ENCODE measurements at regions of chr11 and their contacts with region 1.

Region 1: GRCh38 chr11:44775366-44775984 is 48.7 kb downstream of the TSPAN18 start:
- DNase-seq: peak; percentile 57 to 65 (median 58)
- H3K4me3 ChIP-seq: no peak overlapping the region
- H3K4me3 Mint-ChIP-seq: peak overlapping the region in 1 of 8 donors; percentile 29
- H3K27ac ChIP-seq: no peak overlapping the region
- H3K27ac Mint-ChIP-seq: peak overlapping the region in 2 of 7 donors; percentile 74 to 86
- H3K4me1 ChIP-seq: no peaks in the 10 kb centered on the region
- H3K4me1 Mint-ChIP-seq: peaks cover 22 to 63% (median 32%) of the 10 kb centered on the region in 4 donors
- H3K27me3 ChIP-seq: no peaks in the 10 kb centered on the region
- H3K27me3 Mint-ChIP-seq: no peaks in the 10 kb centered on the region

Region 2: GRCh38 chr11:44556735-44557409 is 218.6 kb before region 1 on chr11:
- CTCF ChIA-PET with region 1: interaction called, 35 read pairs
- POLR2A ChIA-PET with region 1: no interaction called
- intact Hi-C with region 1: loop called (anchors 1 kb)
- DNase-seq: peak; percentile 60 to 69 (median 61)
- H3K4me3 ChIP-seq: no peak overlapping the region
- H3K4me3 Mint-ChIP-seq: no peak overlapping the region
- H3K27ac ChIP-seq: no peak overlapping the region
- H3K27ac Mint-ChIP-seq: peak overlapping the region; percentile 54 to 86 (median 70)
- H3K4me1 ChIP-seq: peaks cover 21% of the 10 kb centered on the region
- H3K4me1 Mint-ChIP-seq: peaks cover 16 to 34% (median 27%) of the 10 kb centered on the region in 4 donors
- H3K27me3 ChIP-seq: no peaks in the 10 kb centered on the region
- H3K27me3 Mint-ChIP-seq: no peaks in the 10 kb centered on the region

Region 3: DNA sequence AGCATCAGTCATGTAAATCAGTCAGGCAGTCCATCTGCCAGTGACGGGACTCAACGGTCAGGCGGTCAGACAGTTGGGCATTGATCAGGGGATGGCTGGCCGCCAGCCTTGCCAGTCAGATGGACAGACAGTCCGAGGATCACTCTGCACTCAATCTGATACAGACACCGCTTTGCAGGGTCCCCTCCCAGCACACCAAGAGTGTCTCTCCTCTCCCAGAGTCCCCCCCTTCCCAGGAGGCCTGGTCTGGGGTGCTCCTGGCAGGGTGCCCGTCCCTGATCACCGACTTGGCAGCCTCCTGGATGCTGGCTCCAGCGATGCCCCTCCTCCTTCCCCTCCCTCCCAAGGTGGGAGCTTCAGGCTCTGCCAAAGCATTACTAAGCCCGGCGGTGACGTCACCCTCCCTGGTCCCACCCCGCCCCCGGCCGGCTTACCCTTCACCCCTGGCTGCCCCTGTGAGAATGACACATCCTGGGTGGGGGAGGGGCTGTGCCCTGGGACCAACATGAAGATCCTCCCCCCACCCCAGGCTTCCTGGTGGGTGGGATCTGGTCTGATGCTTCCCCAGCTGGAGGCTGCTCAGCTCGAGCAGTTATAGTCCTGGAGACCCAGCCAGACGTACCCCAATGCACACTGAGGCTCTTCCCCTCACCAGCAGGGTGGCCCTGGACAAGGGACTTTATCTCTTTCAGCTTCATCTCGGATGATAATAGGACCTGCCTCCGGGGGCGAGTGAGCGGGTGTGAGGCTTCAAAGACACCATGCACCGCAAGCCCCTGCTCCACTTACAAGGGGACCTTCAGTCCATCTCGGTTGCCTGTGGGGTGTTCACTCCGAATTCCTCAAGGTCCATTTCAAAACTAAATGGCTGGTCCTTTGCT is 140.8 kb before region 1 on chr11:
- CTCF ChIA-PET with region 1: interaction called, 14 read pairs
- POLR2A ChIA-PET with region 1: no interaction called
- intact Hi-C with region 1: no loop called
- DNase-seq: no peak
- H3K4me3 ChIP-seq: no peak overlapping the region
- H3K4me3 Mint-ChIP-seq: no peak overlapping the region
- H3K27ac ChIP-seq: no peak overlapping the region
- H3K27ac Mint-ChIP-seq: no peak overlapping the region
- H3K4me1 ChIP-seq: peaks cover 3% of the 10 kb centered on the region
- H3K4me1 Mint-ChIP-seq: peaks cover 0 to 13% (median 7%) of the 10 kb centered on the region in 4 donors
- H3K27me3 ChIP-seq: no peaks in the 10 kb centered on the region
- H3K27me3 Mint-ChIP-seq: peaks cover 8 to 14% of the 10 kb centered on the region in 2 donors

Region 4: DNA sequence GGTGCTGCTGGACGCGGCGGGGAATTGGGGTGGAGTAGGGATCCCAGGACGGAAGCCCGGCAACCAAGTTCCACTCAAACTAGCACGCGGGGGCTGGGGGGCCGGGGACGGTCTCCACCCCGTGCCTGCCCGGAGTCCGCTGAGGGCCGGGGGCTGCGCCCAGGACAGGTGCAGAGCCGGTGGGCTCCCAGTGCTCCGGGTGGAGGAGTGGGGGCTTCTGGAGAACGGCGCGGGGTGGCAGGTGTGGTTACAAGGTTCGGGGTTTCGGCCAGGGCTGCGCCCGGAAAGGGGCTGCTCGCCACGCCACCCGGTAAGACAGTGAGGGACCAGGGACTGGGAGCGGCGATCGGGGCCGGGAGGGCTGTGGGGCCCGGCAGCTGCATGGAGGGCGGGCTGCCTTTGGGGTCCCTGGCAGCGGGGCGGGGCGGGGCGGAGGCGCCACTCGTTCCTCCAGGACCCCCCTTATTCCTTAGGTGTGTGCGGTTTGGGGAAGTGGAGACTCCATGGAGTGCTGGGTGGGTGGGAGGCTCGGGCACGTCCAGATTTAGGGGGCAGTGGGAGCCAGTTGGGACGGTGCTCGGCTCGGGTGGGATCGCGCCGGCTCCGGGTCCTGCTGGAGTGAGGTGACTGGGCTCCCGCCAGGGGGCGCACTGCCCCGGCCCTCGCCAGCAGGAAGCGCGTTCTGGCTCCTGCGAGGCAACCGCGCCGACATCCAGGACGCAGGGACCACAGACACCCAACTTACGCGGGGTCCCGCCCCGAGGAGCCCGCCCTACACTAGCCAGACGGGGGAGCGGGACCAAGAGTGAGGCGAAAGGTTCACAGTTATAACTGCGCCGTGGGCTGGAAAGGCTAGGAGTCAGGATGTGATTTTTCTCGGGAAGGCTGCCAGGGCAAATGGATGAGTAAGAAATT is 47.8 kb before region 1 on chr11:
- CTCF ChIA-PET with region 1: interaction called, 28 read pairs
- POLR2A ChIA-PET with region 1: interaction called, 3 read pairs
- intact Hi-C with region 1: loop called (anchors 1 kb)
- DNase-seq: peak; percentile 77 to 82 (median 79)
- H3K4me3 ChIP-seq: peak overlapping the region; percentile 17 to 74
- H3K4me3 Mint-ChIP-seq: peak overlapping the region; percentile 86 to 94 (median 92)
- H3K27ac ChIP-seq: peak overlapping the region; percentile 66
- H3K27ac Mint-ChIP-seq: peak overlapping the region; percentile 86 to 94 (median 93)
- H3K4me1 ChIP-seq: peaks cover 57% of the 10 kb centered on the region
- H3K4me1 Mint-ChIP-seq: peaks cover 43 to 64% (median 53%) of the 10 kb centered on the region in 4 donors
- H3K27me3 ChIP-seq: no peaks in the 10 kb centered on the region
- H3K27me3 Mint-ChIP-seq: no peaks in the 10 kb centered on the region

Region 5: GRCh38 chr11:44747316-44747715 is 28.2 kb before region 1 on chr11:
- CTCF ChIA-PET with region 1: interaction called, 21 read pairs
- POLR2A ChIA-PET with region 1: interaction called, 3 read pairs
- intact Hi-C with region 1: no loop called
- DNase-seq: peak in 4 of 5 donors; percentile 38 to 46 (median 44)
- H3K4me3 ChIP-seq: no peak overlapping the region
- H3K4me3 Mint-ChIP-seq: peak overlapping the region in 7 of 8 donors; percentile 29 to 80 (median 62)
- H3K27ac ChIP-seq: peak overlapping the region; percentile 28
- H3K27ac Mint-ChIP-seq: peak overlapping the region; percentile 24 to 88 (median 73)
- H3K4me1 ChIP-seq: peaks cover 54% of the 10 kb centered on the region
- H3K4me1 Mint-ChIP-seq: peaks cover 53 to 94% (median 70%) of the 10 kb centered on the region in 4 donors
- H3K27me3 ChIP-seq: no peaks in the 10 kb centered on the region
- H3K27me3 Mint-ChIP-seq: no peaks in the 10 kb centered on the region

Region 6: GRCh38 chr11:44793350-44794090 is 18.0 kb after region 1 on chr11:
- CTCF ChIA-PET with region 1: interaction called, 21 read pairs
- POLR2A ChIA-PET with region 1: interaction called, 3 read pairs
- intact Hi-C with region 1: no loop called
- DNase-seq: no peak
- H3K4me3 ChIP-seq: no peak overlapping the region
- H3K4me3 Mint-ChIP-seq: no peak overlapping the region
- H3K27ac ChIP-seq: no peak overlapping the region
- H3K27ac Mint-ChIP-seq: peak overlapping the region in 3 of 7 donors; percentile 29 to 85 (median 74)
- H3K4me1 ChIP-seq: no peaks in the 10 kb centered on the region
- H3K4me1 Mint-ChIP-seq: peaks cover 7 to 16% (median 10%) of the 10 kb centered on the region in 4 donors
- H3K27me3 ChIP-seq: no peaks in the 10 kb centered on the region
- H3K27me3 Mint-ChIP-seq: no peaks in the 10 kb centered on the region

Measured in CD4-positive, alpha-beta memory T cell (primary cell).